CD8-positive, alpha-beta T cell (primary cell): ENCODE measurements at regions of chr10 and their contacts with region 1.

Region 1: DNA sequence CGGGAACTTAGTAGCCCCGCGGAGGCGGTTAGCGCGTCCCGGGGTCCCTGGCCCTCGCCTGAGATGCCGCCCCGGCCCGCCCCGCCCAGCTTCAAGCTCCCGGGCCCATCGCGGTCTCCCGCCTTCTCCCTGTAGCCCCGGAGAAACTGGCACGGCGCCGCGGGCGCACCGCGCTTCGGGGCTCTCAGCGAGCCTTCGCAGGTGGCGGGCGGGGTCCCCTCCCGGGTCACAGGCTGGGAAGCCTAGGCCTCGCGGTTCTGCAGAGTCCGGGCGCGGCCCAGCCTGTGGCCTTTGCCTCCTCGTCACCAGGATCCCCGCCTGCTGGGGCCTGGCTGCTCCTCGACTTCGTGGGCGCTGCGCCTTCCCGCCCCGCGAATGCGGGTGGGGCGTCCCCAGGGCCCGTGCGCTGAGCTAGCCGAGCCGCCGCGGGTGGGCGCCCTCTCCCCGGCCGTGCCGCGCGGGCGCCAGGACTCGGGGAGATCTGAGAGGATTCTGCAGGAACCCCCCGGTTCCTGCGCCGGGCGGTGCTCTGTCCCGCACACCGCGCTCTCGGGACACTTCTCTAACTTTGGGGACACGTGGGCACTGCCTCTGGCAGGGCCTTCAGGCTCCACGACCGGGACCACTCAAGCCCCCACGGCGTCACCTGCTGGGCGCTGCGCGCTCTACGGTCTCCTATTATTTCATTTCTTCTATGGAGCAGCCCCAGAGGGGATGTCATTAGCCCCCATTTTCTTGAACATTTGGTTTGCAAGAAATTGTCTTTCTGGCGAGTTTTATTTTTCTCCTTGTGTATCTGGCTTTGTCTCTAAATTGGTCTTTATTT is 682 bp upstream of the RGS10 start:
- DNase-seq: peak; percentile 34 to 83 (median 68)
- ATAC-seq: peak; percentile 43
- H3K4me3 ChIP-seq: peak overlapping the region; percentile 86 to 90
- H3K4me3 Mint-ChIP-seq: peak overlapping the region; percentile 95
- H3K27ac ChIP-seq: peak overlapping the region in 1 of 2 experiments; percentile 83
- H3K27ac Mint-ChIP-seq: peak overlapping the region; percentile 95
- H3K4me1 ChIP-seq: peaks cover 18% of the 10 kb centered on the region
- H3K4me1 Mint-ChIP-seq: peaks cover 42% of the 10 kb centered on the region
- H3K27me3 ChIP-seq: no peaks in the 10 kb centered on the region
- H3K27me3 Mint-ChIP-seq: no peaks in the 10 kb centered on the region
- CTCF ChIP-seq: peak; percentile 72

Region 2: DNA sequence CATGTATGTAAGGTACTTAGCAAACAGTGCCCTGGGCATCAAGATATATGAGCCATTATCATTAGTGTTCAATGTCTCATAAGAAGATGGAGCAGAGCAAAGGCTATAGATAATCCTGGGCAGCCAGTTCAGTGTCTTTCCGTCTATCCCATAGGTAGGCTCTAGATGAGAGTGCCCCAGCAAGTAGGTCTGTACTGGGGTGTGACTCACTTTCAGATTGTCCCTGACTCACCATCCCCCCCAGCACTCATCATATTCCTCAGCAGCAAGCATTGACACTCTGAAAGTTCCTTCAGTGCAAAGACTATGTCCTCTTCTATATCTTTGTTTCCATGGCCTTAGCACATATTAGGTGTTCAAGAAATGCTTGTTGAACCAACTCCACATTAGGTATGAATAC is 1181.1 kb before region 1 on chr10:
- CTCF ChIA-PET with region 1: no interaction called
- POLR2A ChIA-PET with region 1: no interaction called
- intact Hi-C with region 1: no loop called
- DNase-seq: no peak
- ATAC-seq: no peak
- H3K4me3 ChIP-seq: no peak overlapping the region
- H3K4me3 Mint-ChIP-seq: no peak overlapping the region
- H3K27ac ChIP-seq: no peak overlapping the region
- H3K27ac Mint-ChIP-seq: no peak overlapping the region
- H3K4me1 ChIP-seq: no peaks in the 10 kb centered on the region
- H3K4me1 Mint-ChIP-seq: no peaks in the 10 kb centered on the region
- H3K27me3 ChIP-seq: no peaks in the 10 kb centered on the region
- H3K27me3 Mint-ChIP-seq: peaks cover 8% of the 10 kb centered on the region
- CTCF ChIP-seq: no peak

Region 3: GRCh38 chr10:119178372-119179119 is 364.7 kb before region 1 on chr10 and contains the start of gene PRDX3:
- CTCF ChIA-PET with region 1: no interaction called
- POLR2A ChIA-PET with region 1: no interaction called
- intact Hi-C with region 1: loop called in 1 of 2 experiments (anchors 2 kb)
- DNase-seq: peak; percentile 85 to 94 (median 93)
- ATAC-seq: peak; percentile 99
- H3K4me3 ChIP-seq: peak within 1 kb of the TSS; percentile 85 to 93
- H3K4me3 Mint-ChIP-seq: peak within 1 kb of the TSS; percentile 89
- H3K27ac ChIP-seq: peak within 1 kb of the TSS; percentile 73 to 75
- H3K27ac Mint-ChIP-seq: peak within 1 kb of the TSS; percentile 95
- H3K4me1 ChIP-seq: peaks cover 20% of the 10 kb centered on the region
- H3K4me1 Mint-ChIP-seq: peaks cover 35% of the 10 kb centered on the region
- H3K27me3 ChIP-seq: no peaks in the 10 kb centered on the region
- H3K27me3 Mint-ChIP-seq: no peaks in the 10 kb centered on the region
- CTCF ChIP-seq: no peak
- total RNA-seq, gene PRDX3: 7.6 to 11.7 TPM

Region 4: GRCh38 chr10:119445311-119445934 is 97.8 kb before region 1 on chr10:
- CTCF ChIA-PET with region 1: interaction called, 98 read pairs
- POLR2A ChIA-PET with region 1: interaction called, 3 read pairs
- intact Hi-C with region 1: loop called (anchors 1 kb)
- DNase-seq: peak; percentile 67 to 93 (median 85)
- ATAC-seq: peak; percentile 80
- H3K4me3 ChIP-seq: no peak overlapping the region
- H3K4me3 Mint-ChIP-seq: no peak overlapping the region
- H3K27ac ChIP-seq: no peak overlapping the region
- H3K27ac Mint-ChIP-seq: peak overlapping the region; percentile 66
- H3K4me1 ChIP-seq: peaks cover 10% of the 10 kb centered on the region
- H3K4me1 Mint-ChIP-seq: peaks cover 11% of the 10 kb centered on the region
- H3K27me3 ChIP-seq: no peaks in the 10 kb centered on the region
- H3K27me3 Mint-ChIP-seq: no peaks in the 10 kb centered on the region
- CTCF ChIP-seq: peak; percentile 81

Region 5: GRCh38 chr10:119517235-119518141 is 25.7 kb before region 1 on chr10:
- CTCF ChIA-PET with region 1: interaction called, 108 read pairs
- POLR2A ChIA-PET with region 1: interaction called, 43 read pairs
- intact Hi-C with region 1: loop called (anchors 1 to 2 kb)
- DNase-seq: peak in 6 of 9 experiments; percentile 57 to 74 (median 64)
- ATAC-seq: peak; percentile 24
- H3K4me3 ChIP-seq: peak overlapping the region; percentile 2 to 11
- H3K4me3 Mint-ChIP-seq: peak overlapping the region; percentile 76
- H3K27ac ChIP-seq: peak overlapping the region; percentile 25 to 83
- H3K27ac Mint-ChIP-seq: peak overlapping the region; percentile 93
- H3K4me1 ChIP-seq: peaks cover 70% of the 10 kb centered on the region
- H3K4me1 Mint-ChIP-seq: peaks cover 73% of the 10 kb centered on the region
- H3K27me3 ChIP-seq: no peaks in the 10 kb centered on the region
- H3K27me3 Mint-ChIP-seq: no peaks in the 10 kb centered on the region
- CTCF ChIP-seq: no peak

Region 6: GRCh38 chr10:119725828-119726675 is 182.9 kb after region 1 on chr10 and contains the start of gene INPP5F:
- CTCF ChIA-PET with region 1: no interaction called
- POLR2A ChIA-PET with region 1: no interaction called
- intact Hi-C with region 1: loop called in 1 of 2 experiments (anchors 2 kb)
- DNase-seq: peak; percentile 95 to 100 (median 98)
- ATAC-seq: peak; percentile 95
- H3K4me3 ChIP-seq: peak within 1 kb of the TSS; percentile 64 to 81
- H3K4me3 Mint-ChIP-seq: peak within 1 kb of the TSS; percentile 90
- H3K27ac ChIP-seq: peak within 1 kb of the TSS; percentile 33 to 44
- H3K27ac Mint-ChIP-seq: peak within 1 kb of the TSS; percentile 81
- H3K4me1 ChIP-seq: peaks cover 16% of the 10 kb centered on the region
- H3K4me1 Mint-ChIP-seq: peaks cover 27% of the 10 kb centered on the region
- H3K27me3 ChIP-seq: no peaks in the 10 kb centered on the region
- H3K27me3 Mint-ChIP-seq: no peaks in the 10 kb centered on the region
- CTCF ChIP-seq: no peak
- total RNA-seq, gene INPP5F: 3.8 to 6.5 TPM